ENCODE measurements at regions of chr6 and their contacts with region 1.

Region 1: GRCh38 chr6:27864906-27865849 is 47.0 kb downstream of the OR2B2 start:
- DNase-seq: peak; percentile 90
- ATAC-seq: peak; percentile 57
- H3K4me3 Mint-ChIP-seq: peak overlapping the region; percentile 87
- H3K27ac Mint-ChIP-seq: peak overlapping the region; percentile 99
- H3K4me1 Mint-ChIP-seq: peaks cover 55% of the 10 kb centered on the region
- H3K27me3 Mint-ChIP-seq: no peaks in the 10 kb centered on the region

Region 2: GRCh38 chr6:26045065-26045927 is 1819.9 kb before region 1 on chr6:
- CTCF ChIA-PET with region 1: no interaction called
- POLR2A ChIA-PET with region 1: interaction called, 155 read pairs
- DNase-seq: peak; percentile 91
- ATAC-seq: peak; percentile 55
- H3K4me3 Mint-ChIP-seq: peak overlapping the region; percentile 88
- H3K27ac Mint-ChIP-seq: peak overlapping the region; percentile 99
- H3K4me1 Mint-ChIP-seq: peaks cover 43% of the 10 kb centered on the region
- H3K27me3 Mint-ChIP-seq: no peaks in the 10 kb centered on the region

Region 3: GRCh38 chr6:26183581-26184366 is 1681.4 kb before region 1 on chr6:
- CTCF ChIA-PET with region 1: no interaction called
- POLR2A ChIA-PET with region 1: interaction called, 24 read pairs
- DNase-seq: peak; percentile 80
- ATAC-seq: peak; percentile 80
- H3K4me3 Mint-ChIP-seq: peak overlapping the region; percentile 83
- H3K27ac Mint-ChIP-seq: peak overlapping the region; percentile 97
- H3K4me1 Mint-ChIP-seq: peaks cover 79% of the 10 kb centered on the region
- H3K27me3 Mint-ChIP-seq: no peaks in the 10 kb centered on the region

Region 4: DNA sequence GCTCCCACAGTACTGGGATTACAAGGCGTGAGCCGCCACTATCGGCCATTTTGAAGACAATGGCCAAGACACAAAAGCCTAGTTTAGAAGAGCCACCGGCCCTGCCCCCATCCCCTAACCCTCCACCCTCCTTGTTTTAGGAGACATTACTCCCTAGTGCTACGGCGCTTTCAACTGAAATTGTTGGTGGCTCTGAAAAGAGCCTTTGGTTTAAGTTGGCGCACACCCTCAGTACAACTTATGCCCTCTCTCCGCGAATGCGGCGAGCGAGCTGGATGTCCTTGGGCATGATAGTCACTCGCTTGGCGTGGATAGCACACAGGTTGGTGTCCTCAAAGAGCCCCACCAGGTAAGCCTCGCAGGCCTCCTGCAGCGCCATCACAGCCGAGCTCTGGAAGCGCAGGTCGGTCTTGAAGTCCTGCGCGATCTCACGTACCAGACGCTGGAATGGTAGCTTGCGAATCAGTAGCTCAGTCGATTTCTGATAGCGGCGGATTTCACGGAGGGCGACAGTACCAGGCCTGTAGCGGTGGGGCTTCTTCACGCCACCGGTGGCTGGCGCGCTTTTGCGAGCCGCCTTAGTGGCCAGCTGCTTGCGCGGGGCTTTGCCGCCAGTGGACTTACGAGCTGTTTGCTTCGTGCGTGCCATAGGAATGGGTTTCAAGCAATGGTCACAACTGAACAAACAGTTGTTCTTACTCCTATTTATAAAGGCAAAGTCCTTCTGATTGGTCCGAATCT is 1615.1 kb before region 1 on chr6:
- CTCF ChIA-PET with region 1: no interaction called
- POLR2A ChIA-PET with region 1: interaction called, 36 read pairs
- DNase-seq: peak; percentile 85
- ATAC-seq: peak; percentile 55
- H3K4me3 Mint-ChIP-seq: peak overlapping the region; percentile 84
- H3K27ac Mint-ChIP-seq: peak overlapping the region; percentile 100
- H3K4me1 Mint-ChIP-seq: peaks cover 30% of the 10 kb centered on the region
- H3K27me3 Mint-ChIP-seq: no peaks in the 10 kb centered on the region

Region 5: DNA sequence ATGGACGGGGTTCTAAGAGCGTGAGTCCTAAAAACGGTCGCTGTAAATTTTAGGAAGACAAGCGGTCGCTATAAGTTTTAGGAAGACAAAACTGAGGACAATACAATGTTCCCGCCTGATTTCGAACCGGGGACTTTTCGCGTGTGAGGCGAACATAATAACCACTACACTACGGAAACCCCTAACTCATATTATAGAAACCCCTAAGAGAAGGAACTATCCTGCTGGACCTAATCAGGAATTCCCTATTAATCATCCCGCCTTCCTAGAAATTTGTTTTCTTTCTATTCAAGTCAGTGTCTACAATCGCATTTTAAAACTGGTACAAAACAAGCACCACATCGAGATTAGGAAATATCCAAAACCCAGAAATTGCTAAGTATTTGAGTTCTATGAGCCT is 136.7 kb before region 1 on chr6:
- CTCF ChIA-PET with region 1: no interaction called
- POLR2A ChIA-PET with region 1: no interaction called
- DNase-seq: no peak
- ATAC-seq: no peak
- H3K4me3 Mint-ChIP-seq: no peak overlapping the region
- H3K27ac Mint-ChIP-seq: no peak overlapping the region
- H3K4me1 Mint-ChIP-seq: no peaks in the 10 kb centered on the region
- H3K27me3 Mint-ChIP-seq: peaks cover 27% of the 10 kb centered on the region

Region 6: DNA sequence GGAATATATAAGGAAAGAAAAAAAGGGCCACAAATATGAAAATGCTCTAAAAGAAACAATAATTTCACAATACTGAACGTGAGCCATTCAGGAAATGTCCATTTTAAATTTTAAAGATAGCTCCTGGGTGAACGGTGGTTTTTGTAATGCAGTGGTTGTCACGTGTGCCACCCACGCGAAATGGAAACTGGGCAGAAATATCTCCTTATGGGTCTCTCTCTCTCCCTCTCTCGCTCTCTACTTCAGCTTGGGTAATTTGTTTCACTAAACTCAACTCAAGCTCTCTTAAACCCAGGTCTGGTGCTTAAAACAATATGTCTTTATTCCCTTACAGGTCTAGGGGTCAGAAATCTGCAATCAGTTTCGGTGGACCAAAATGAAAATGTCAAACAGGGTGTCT is 103.8 kb before region 1 on chr6:
- CTCF ChIA-PET with region 1: no interaction called
- POLR2A ChIA-PET with region 1: no interaction called
- DNase-seq: no peak
- ATAC-seq: no peak
- H3K4me3 Mint-ChIP-seq: no peak overlapping the region
- H3K27ac Mint-ChIP-seq: no peak overlapping the region
- H3K4me1 Mint-ChIP-seq: peaks cover 21% of the 10 kb centered on the region
- H3K27me3 Mint-ChIP-seq: peaks cover 5% of the 10 kb centered on the region

Region 7: GRCh38 chr6:27825025-27825793 is 40.0 kb before region 1 on chr6:
- CTCF ChIA-PET with region 1: interaction called, 21 read pairs
- POLR2A ChIA-PET with region 1: interaction called, 2,805 read pairs
- DNase-seq: no peak
- ATAC-seq: peak; percentile 3
- H3K4me3 Mint-ChIP-seq: peak overlapping the region; percentile 93
- H3K27ac Mint-ChIP-seq: peak overlapping the region; percentile 99
- H3K4me1 Mint-ChIP-seq: peaks cover 45% of the 10 kb centered on the region
- H3K27me3 Mint-ChIP-seq: no peaks in the 10 kb centered on the region

Region 8: DNA sequence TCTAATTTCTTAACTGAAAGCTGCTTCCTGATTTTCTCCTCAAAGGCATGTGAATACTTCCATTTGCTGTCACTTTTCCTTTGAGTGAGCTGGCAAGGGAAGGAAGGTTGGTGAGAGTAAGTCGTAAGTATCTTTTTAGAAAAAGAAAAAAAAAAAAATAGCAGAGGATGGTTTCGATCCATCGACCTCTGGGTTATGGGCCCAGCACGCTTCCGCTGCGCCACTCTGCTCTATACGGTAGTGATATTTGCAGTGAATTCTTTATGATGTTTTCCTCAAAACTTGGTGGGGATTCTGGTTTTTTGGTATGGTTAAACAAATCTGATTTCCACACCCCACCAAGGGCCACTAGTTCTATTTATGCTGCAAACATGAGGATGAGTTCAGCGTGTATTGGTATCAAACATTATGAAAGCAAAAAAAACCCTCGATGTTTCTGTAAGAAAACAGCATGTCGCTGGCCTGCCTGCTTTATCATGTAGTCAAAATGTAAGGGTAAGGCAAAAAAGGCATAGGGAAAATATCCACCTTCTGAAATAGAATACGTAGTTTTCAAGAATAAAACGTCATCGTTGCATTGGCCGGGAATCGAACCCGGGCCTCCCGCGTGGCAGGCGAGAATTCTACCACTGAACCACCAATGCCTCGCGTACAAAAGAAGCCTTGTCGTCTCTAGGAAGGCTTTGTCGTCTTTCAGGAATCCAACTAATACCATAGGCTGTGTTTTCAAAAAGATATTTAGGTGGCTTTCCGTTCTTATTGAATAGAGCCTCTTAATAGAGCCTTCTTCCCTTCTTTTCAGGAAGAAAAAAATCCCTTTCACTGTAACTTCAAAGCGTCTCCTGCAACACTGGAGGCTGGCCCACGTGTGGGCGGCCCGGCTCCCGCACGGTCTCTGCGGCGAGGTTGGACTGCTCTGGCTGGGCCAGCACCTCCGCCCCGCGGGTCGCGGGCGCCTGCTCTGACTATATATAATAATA is 37.4 kb after region 1 on chr6:
- CTCF ChIA-PET with region 1: interaction called, 109 read pairs
- POLR2A ChIA-PET with region 1: interaction called, 1,677 read pairs
- DNase-seq: peak; percentile 90
- ATAC-seq: peak; percentile 89
- H3K4me3 Mint-ChIP-seq: peak overlapping the region; percentile 81
- H3K27ac Mint-ChIP-seq: peak overlapping the region; percentile 90
- H3K4me1 Mint-ChIP-seq: peaks cover 16% of the 10 kb centered on the region
- H3K27me3 Mint-ChIP-seq: peaks cover 16% of the 10 kb centered on the region

Measured in activated CD8-positive, alpha-beta T cell treated with anti-CD3 and anti-CD28 coated beads, Interleukin-2, amount 10 ng/mL, durations not matched to agents 7 days and 5 days (primary cell).